Astrocyte of the cerebellum (primary cell): ENCODE measurements at regions of chr19 and their contacts with region 1.

Region 1: DNA sequence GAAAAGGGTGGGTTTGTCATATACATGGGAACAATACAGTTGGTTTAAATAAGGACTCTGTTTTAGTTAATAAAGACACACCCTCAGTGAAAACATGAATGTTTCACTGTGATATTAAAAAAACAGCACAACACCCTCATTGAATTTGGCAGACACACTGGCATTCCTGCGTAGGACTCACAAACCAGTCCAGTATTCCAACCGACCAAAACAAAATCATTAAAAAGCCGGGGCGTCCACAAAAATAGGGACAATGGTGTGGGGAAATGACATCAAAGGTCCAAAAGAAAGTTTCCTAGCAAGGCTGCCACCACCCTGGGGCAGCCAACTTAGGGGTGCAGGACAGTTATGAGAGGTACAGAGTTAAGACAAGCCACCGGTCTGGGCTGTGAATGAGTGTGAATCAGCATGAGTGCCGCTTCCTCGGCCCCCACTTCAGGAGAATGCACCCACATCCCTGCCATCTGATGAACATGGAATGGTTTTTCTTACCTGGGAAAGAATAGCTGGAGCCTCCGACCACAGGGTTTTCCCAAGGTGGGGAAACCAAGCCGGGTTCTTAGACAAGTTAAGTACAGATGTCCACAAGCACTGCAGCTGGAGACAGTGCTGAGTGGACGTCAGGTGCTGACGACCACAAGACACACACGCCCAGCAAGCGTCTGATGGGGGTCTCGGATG is 73.3 kb downstream of the KLF2 start:
- DNase-seq: no peak
- H3K4me3 ChIP-seq: no peak overlapping the region
- CTCF ChIP-seq: no peak

Region 2: GRCh38 chr19:16216744-16217670 is 180.9 kb before region 1 on chr19:
- in situ Hi-C with region 1: loop called (anchors 10 kb)
- DNase-seq: no peak
- H3K4me3 ChIP-seq: no peak overlapping the region
- CTCF ChIP-seq: no peak

Region 3: DNA sequence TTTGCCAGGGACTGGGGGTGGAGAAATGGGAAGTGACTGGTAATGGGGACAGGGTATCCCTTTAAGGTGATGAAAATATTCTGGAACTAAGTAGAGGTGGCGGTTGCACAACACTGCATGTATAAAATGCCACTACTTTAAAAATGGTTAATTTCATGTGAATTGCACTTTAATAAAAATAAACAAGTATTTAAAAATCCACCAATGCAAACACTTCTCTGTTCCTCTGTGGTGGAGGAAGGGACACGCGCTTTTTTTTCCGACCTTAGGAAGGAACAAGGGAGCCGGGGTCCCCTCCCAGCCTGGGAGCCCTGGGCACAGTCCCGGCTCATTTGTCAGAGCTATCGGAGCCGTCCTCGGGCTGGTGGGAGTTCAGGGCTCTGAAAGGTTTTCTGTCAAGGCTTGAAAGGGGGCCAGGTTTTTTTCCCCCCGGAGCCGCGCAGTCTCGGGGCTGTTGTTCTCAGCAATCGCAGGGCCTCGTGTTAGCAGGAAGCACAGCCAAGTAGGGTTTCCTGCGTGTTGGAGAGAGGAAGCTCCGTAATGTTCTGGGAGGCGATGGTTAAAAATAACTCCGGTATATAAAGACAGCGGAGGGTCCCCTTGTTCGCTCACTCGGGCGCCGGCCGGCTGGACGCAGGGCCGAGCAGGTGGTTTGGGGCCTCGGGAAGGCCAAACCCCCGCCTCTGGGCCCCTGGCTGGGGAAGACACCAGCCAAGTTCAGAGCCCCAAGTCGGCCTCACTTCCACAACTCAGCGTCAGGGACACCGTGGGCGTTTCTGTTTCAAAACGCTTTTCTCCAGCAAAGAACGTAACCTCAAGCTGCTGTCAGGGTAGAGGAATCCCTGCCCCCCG is 114.5 kb before region 1 on chr19:
- in situ Hi-C with region 1: loop called (anchors 10 kb)
- DNase-seq: peak; percentile 26
- H3K4me3 ChIP-seq: no peak overlapping the region
- CTCF ChIP-seq: no peak